ENCODE measurements at regions of chr2 and their contacts with region 1.

Region 1: GRCh38 chr2:175167792-175168563 is at the start of gene ATF2:
- DNase-seq: peak; percentile 94 to 100 (median 96)
- ATAC-seq: peak; percentile 91
- H3K4me3 ChIP-seq: peak within 1 kb of the TSS; percentile 95 to 99
- H3K4me3 Mint-ChIP-seq: peak within 1 kb of the TSS; percentile 100
- H3K27ac ChIP-seq: peak within 1 kb of the TSS; percentile 87 to 92
- H3K27ac Mint-ChIP-seq: peak within 1 kb of the TSS; percentile 99
- H3K4me1 ChIP-seq: peaks cover 19% of the 10 kb centered on the region
- H3K4me1 Mint-ChIP-seq: peaks cover 48% of the 10 kb centered on the region
- H3K27me3 ChIP-seq: no peaks in the 10 kb centered on the region
- H3K27me3 Mint-ChIP-seq: no peaks in the 10 kb centered on the region
- CTCF ChIP-seq: no peak
- total RNA-seq, gene ATF2: 42.9 to 43.6 TPM

Region 2: GRCh38 chr2:174395284-174395968 is 772.6 kb before region 1 on chr2 and contains the start of gene SCRN3:
- CTCF ChIA-PET with region 1: no interaction called
- POLR2A ChIA-PET with region 1: no interaction called
- intact Hi-C with region 1: loop called in 1 of 2 experiments (anchors 1 kb)
- DNase-seq: peak; percentile 55 to 92 (median 79)
- ATAC-seq: peak; percentile 90
- H3K4me3 ChIP-seq: peak within 1 kb of the TSS; percentile 78 to 91
- H3K4me3 Mint-ChIP-seq: peak within 1 kb of the TSS; percentile 98
- H3K27ac ChIP-seq: peak within 1 kb of the TSS; percentile 93 to 97
- H3K27ac Mint-ChIP-seq: peak within 1 kb of the TSS; percentile 100
- H3K4me1 ChIP-seq: peaks cover 29% of the 10 kb centered on the region
- H3K4me1 Mint-ChIP-seq: peaks cover 55% of the 10 kb centered on the region
- H3K27me3 ChIP-seq: no peaks in the 10 kb centered on the region
- H3K27me3 Mint-ChIP-seq: no peaks in the 10 kb centered on the region
- CTCF ChIP-seq: no peak
- total RNA-seq, gene SCRN3: 5.9 to 7.3 TPM

Region 3: DNA sequence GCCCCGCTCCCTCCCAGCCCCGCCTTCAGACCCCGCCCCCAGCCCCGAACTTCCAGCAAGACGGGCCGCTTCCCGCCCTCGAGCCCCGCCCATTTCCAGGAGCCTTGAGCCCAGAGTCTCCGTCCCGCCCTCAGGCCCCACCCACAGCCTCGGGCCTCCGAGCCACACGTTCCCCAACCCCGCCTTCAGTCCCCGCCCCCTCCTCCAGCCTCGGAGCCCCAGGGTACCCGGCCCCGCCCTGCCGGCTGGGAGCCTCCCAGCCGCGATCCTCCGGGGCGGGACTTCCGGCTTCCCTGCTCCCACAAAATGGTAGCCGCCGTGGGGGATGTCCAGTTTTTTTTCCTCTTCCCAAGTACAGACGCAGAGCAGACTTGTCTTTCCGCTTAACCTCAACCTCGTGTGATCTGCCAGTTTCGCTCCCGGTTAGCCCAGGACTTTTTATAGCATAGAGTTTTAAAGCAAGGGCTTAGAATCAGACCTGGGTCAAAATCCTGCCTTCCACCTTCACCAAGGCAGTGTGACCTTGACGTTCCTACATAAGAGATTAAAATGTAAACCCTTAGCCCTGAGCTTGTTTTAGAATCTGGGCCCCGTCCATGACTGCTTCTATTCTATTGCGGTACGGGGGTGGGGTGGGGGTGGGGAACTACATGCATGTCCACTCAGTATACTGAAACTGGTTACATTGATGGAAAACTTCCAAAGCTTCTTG is 680.7 kb before region 1 on chr2:
- CTCF ChIA-PET with region 1: no interaction called
- POLR2A ChIA-PET with region 1: no interaction called
- intact Hi-C with region 1: loop called (anchors 1 to 2 kb)
- DNase-seq: peak; percentile 77 to 98 (median 97)
- ATAC-seq: peak; percentile 74
- H3K4me3 ChIP-seq: peak overlapping the region; percentile 83 to 86
- H3K4me3 Mint-ChIP-seq: peak overlapping the region; percentile 97
- H3K27ac ChIP-seq: peak overlapping the region; percentile 69 to 85
- H3K27ac Mint-ChIP-seq: peak overlapping the region; percentile 88
- H3K4me1 ChIP-seq: peaks cover 59% of the 10 kb centered on the region
- H3K4me1 Mint-ChIP-seq: peaks cover 73% of the 10 kb centered on the region
- H3K27me3 ChIP-seq: no peaks in the 10 kb centered on the region
- H3K27me3 Mint-ChIP-seq: no peaks in the 10 kb centered on the region
- CTCF ChIP-seq: no peak

Region 4: DNA sequence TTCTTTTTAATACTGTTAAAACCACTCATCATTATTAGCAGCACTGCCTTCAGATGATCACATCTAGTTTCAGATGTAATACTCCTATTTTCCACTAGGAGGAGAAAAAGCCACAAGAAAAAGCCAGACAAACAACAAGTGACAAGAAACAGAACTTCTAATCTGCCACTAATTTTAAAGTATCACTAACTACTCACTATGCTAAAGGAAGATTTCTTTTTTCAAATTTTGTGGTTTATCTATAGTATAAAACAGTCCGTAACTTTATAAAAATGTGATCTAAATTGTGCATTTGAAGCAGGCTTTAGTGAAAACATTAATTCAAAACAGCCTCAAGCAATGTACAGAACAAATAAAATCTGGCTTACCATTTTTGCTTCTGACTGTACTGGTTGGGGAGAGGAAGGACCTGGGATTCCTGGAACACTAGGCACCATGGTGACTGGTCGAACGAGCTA is 56.7 kb before region 1 on chr2:
- CTCF ChIA-PET with region 1: no interaction called
- POLR2A ChIA-PET with region 1: no interaction called
- intact Hi-C with region 1: loop called in 1 of 2 experiments (anchors 10 kb)
- DNase-seq: peak in 2 of 9 experiments; percentile 53 to 67
- ATAC-seq: peak; percentile 72
- H3K4me3 ChIP-seq: no peak overlapping the region
- H3K4me3 Mint-ChIP-seq: no peak overlapping the region
- H3K27ac ChIP-seq: no peak overlapping the region
- H3K27ac Mint-ChIP-seq: peak overlapping the region; percentile 33
- H3K4me1 ChIP-seq: no peaks in the 10 kb centered on the region
- H3K4me1 Mint-ChIP-seq: no peaks in the 10 kb centered on the region
- H3K27me3 ChIP-seq: no peaks in the 10 kb centered on the region
- H3K27me3 Mint-ChIP-seq: no peaks in the 10 kb centered on the region
- CTCF ChIP-seq: peak; percentile 97

Region 5: DNA sequence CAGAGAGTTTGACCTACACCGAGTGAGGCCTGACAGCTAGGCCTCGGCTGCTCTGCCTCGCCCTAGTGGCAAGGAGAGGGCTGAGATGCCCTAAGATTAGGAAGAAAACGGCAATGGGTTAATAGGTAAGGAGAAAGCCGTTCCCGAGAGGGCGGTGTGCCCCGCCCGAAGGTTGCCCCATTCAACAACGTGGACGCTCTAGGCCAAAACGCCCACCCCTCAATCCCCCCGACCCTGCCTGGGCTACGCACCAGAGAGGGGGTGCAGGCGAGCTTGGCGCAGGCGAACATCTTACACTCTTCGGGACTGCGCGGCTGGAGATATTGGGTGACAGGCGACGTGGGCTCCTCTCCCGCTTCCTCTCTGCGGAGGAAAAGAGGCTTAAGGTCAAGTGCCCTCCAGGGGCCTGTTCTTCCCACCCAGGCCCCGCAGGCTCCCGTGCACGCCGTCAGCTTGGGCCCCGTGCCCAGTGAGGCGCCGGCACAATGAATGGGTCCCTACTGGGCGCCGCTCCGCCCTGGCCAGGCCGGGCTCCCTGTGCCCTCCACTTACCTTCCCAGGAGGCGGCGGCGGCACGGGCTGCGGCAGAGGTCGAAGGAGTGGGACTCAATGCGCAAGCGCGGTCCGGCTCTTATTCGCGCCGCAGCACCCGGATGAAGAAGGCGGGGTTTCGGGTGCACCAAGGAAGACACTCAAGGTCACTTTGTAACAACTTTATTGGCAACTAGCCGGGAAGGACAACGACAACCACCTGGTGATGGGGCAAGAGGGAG is 13.3 kb after region 1 on chr2 and contains the start of gene ATP5MC3:
- CTCF ChIA-PET with region 1: interaction called, 3 read pairs
- POLR2A ChIA-PET with region 1: interaction called, 7 read pairs
- intact Hi-C with region 1: loop called (anchors 1 kb)
- DNase-seq: peak; percentile 80 to 97 (median 92)
- ATAC-seq: peak; percentile 90
- H3K4me3 ChIP-seq: peak within 1 kb of the TSS; percentile 88 to 96
- H3K4me3 Mint-ChIP-seq: peak within 1 kb of the TSS; percentile 94
- H3K27ac ChIP-seq: peak within 1 kb of the TSS; percentile 73 to 76
- H3K27ac Mint-ChIP-seq: peak within 1 kb of the TSS; percentile 87
- H3K4me1 ChIP-seq: peaks cover 13% of the 10 kb centered on the region
- H3K4me1 Mint-ChIP-seq: peaks cover 27% of the 10 kb centered on the region
- H3K27me3 ChIP-seq: no peaks in the 10 kb centered on the region
- H3K27me3 Mint-ChIP-seq: no peaks in the 10 kb centered on the region
- CTCF ChIP-seq: no peak
- total RNA-seq, gene ATP5MC3: 70.2 to 73.4 TPM

Region 6: GRCh38 chr2:176269319-176270099 is 1101.5 kb after region 1 on chr2 and contains the start of gene MTX2:
- CTCF ChIA-PET with region 1: no interaction called
- POLR2A ChIA-PET with region 1: no interaction called
- intact Hi-C with region 1: loop called in 1 of 2 experiments (anchors 5 kb)
- DNase-seq: peak; percentile 44 to 83 (median 69)
- ATAC-seq: peak; percentile 86
- H3K4me3 ChIP-seq: peak within 1 kb of the TSS; percentile 86 to 93
- H3K4me3 Mint-ChIP-seq: peak within 1 kb of the TSS; percentile 95
- H3K27ac ChIP-seq: peak within 1 kb of the TSS; percentile 67 to 76
- H3K27ac Mint-ChIP-seq: peak within 1 kb of the TSS; percentile 93
- H3K4me1 ChIP-seq: peaks cover 10% of the 10 kb centered on the region
- H3K4me1 Mint-ChIP-seq: peaks cover 40% of the 10 kb centered on the region
- H3K27me3 ChIP-seq: no peaks in the 10 kb centered on the region
- H3K27me3 Mint-ChIP-seq: peaks cover under 1% of the 10 kb centered on the region
- CTCF ChIP-seq: no peak
- total RNA-seq, gene MTX2: 4.5 to 6.8 TPM

Region 7: GRCh38 chr2:177010861-177011260 is 1842.9 kb after region 1 on chr2:
- CTCF ChIA-PET with region 1: no interaction called
- POLR2A ChIA-PET with region 1: no interaction called
- intact Hi-C with region 1: no loop called
- DNase-seq: no peak
- ATAC-seq: no peak
- H3K4me3 ChIP-seq: no peak overlapping the region
- H3K4me3 Mint-ChIP-seq: no peak overlapping the region
- H3K27ac ChIP-seq: no peak overlapping the region
- H3K27ac Mint-ChIP-seq: no peak overlapping the region
- H3K4me1 ChIP-seq: peaks cover 3% of the 10 kb centered on the region
- H3K4me1 Mint-ChIP-seq: peaks cover 5% of the 10 kb centered on the region
- H3K27me3 ChIP-seq: no peaks in the 10 kb centered on the region
- H3K27me3 Mint-ChIP-seq: peaks cover 11% of the 10 kb centered on the region
- CTCF ChIP-seq: no peak